ENCODE measurements at regions of chr1 and their contacts with region 1.

Region 1: GRCh38 chr1:95084317-95085176 is 11.8 kb upstream of the ALG14 start:
- DNase-seq: no peak
- H3K4me3 ChIP-seq: no peak overlapping the region
- H3K27ac ChIP-seq: no peak overlapping the region
- H3K4me1 ChIP-seq: no peaks in the 10 kb centered on the region
- H3K27me3 ChIP-seq: peaks cover 0 to 3% (median 0%) of the 10 kb centered on the region in 7 donors
- CTCF ChIP-seq: peak in 9 of 11 experiments; percentile 33 to 73 (median 62)
- POLR2A ChIP-seq: no peak

Region 2: DNA sequence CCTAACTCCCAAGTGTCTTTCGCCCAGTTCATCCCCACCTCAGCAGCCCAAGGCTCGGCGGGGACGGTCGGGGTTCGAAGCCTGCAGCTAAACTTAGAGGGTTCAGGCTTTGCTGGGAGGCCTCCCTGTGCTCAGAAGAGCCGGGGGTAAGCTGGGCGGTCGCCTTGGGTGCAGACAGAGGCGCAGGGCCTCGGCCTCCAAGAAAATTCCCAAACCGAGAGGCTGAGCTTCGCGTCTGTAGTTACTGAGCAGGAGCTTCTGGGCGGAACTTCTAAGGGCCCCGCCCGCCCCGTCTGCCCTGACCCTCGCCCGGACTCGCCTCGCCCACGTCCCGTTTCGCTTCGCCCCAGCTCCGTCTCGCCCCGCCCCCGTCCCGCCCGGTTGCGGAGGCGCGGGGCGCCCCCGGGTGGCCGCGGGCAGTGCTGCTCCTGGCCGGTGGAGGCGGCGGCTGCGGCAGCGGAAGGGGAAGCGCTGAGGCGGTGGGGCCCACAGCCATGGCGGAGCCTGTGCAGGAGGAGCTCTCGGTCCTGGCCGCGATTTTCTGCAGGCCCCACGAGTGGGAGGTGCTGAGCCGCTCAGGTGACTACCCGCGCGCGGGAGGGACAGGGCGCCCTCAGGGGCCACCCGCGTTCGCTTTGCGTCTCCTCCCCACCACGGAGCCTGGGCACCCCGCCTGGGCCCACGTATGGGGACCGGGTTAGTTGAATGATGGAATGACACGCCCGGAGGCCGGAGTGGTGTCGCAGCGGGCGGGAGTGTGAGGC is 149.4 kb after region 1 on chr1 and contains the start of gene RWDD3:
- intact Hi-C with region 1: loop called (anchors 10 kb)
- DNase-seq: peak; percentile 99
- H3K4me3 ChIP-seq: peak within 1 kb of the TSS; percentile 52 to 93 (median 80)
- H3K27ac ChIP-seq: peak within 1 kb of the TSS; percentile 53 to 91 (median 89)
- H3K4me1 ChIP-seq: peaks cover 0 to 63% (median 36%) of the 10 kb centered on the region in 6 donors
- H3K27me3 ChIP-seq: peaks cover 0 to 8% (median 0%) of the 10 kb centered on the region in 7 donors
- CTCF ChIP-seq: peak; percentile 42 to 100 (median 98)
- POLR2A ChIP-seq: peak; percentile 10 to 45 (median 35)
- total RNA-seq, gene RWDD3: 13.8 to 27.1 (median 18.1) TPM

Measured in spleen (tissue), 13 donors.